ENCODE measurements at regions of chr3 and their contacts with region 1.

Region 1: GRCh38 chr3:124467980-124468902 is 262.0 kb upstream of the UMPS start:
- DNase-seq: peak; percentile 78
- H3K4me3 ChIP-seq: no peak overlapping the region; a peak in 1 of 4 replicates
- H3K27ac ChIP-seq: peak overlapping the region in 1 of 2 experiments; percentile 47; a peak in 1 of 4 replicates
- H3K4me1 ChIP-seq: peaks cover 0 to 10% of the 10 kb centered on the region in 2 experiments; a peak in 2 of 4 replicates
- H3K27me3 ChIP-seq: no peaks in the 10 kb centered on the region
- CTCF ChIP-seq: peak; percentile 99
- EP300 ChIP-seq: no peak
- RAD21 ChIP-seq: peak; percentile 99

Region 2: DNA sequence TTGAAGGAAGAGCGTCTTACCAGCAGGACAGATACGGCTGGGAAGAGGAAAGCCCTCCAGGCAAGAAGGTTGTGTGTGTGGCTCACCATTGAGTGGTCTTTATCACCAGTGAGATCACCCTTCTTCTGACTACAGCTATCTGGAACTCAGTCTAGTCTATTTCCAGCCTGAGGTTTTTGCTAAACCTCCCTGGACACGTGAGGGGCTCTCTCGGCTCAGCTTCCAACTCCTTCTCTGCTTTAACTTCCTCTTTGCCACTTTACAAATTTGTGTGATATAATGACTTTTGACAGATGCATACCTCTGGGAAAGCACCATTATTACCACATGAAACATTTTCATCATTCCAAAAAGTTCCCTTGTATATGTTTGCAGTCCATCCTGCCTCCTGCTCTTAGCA is 461.1 kb before region 1 on chr3:
- CTCF ChIA-PET with region 1: interaction called, 11 read pairs
- POLR2A ChIA-PET with region 1: no interaction called
- DNase-seq: no peak
- H3K4me3 ChIP-seq: no peak overlapping the region
- H3K27ac ChIP-seq: peak overlapping the region; percentile 24 to 43; a peak in 2 of 4 replicates
- H3K4me1 ChIP-seq: peaks cover 0 to 2% of the 10 kb centered on the region in 2 experiments; a peak in 1 of 4 replicates
- H3K27me3 ChIP-seq: no peaks in the 10 kb centered on the region
- CTCF ChIP-seq: no peak
- EP300 ChIP-seq: peak in 1 of 2 experiments; percentile 21; a peak in 1 of 4 replicates
- RAD21 ChIP-seq: no peak

Region 3: GRCh38 chr3:124032648-124033359 is 435.4 kb before region 1 on chr3:
- CTCF ChIA-PET with region 1: interaction called, 11 read pairs
- POLR2A ChIA-PET with region 1: no interaction called
- DNase-seq: peak; percentile 97
- H3K4me3 ChIP-seq: peak overlapping the region; percentile 96 to 97
- H3K27ac ChIP-seq: peak overlapping the region; percentile 65 to 92
- H3K4me1 ChIP-seq: peaks cover 0 to 22% of the 10 kb centered on the region in 2 experiments; a peak in 3 of 4 replicates
- H3K27me3 ChIP-seq: no peaks in the 10 kb centered on the region
- CTCF ChIP-seq: peak; percentile 56
- EP300 ChIP-seq: peak; percentile 4 to 83; a peak in 1 of 4 replicates
- RAD21 ChIP-seq: peak; percentile 49

Region 4: DNA sequence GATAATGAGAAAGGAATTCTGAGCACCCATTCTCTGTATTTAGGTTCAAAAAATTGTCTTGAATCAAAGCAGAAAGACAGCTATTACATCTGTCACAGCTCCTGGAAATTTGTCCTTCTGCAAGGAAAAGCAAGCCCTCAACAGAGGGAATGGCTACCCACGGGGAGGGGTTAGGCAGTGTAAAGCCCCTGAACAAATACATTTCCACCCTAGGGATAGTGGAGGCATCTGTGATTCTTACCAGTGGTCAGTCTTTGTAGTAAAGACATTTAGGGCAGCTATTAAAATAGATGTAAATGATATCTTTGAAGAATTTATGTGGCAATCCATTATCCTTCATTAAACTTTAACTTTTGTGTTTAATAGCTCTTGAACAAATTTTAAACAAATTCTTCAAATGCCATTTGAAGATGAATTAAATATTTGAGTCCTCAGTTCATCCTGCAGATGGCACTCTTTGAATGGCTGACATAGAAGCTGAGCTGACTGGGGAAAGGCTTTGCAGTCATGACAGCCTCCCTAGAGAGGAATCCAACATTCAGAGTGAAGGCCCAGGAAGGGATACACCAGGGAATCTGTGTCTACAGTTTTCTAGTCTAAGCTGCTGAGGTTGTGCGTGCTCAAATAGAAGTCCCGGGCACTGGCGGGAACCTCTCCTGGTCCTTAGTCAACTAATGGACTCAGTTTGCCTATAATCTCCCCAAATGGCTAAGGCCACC is 116.7 kb before region 1 on chr3:
- CTCF ChIA-PET with region 1: interaction called, 165 read pairs
- POLR2A ChIA-PET with region 1: no interaction called
- DNase-seq: peak; percentile 62
- H3K4me3 ChIP-seq: no peak overlapping the region
- H3K27ac ChIP-seq: peak overlapping the region in 1 of 2 experiments; percentile 67; a peak in 2 of 4 replicates
- H3K4me1 ChIP-seq: peaks cover 0 to 10% of the 10 kb centered on the region in 2 experiments; a peak in 2 of 4 replicates
- H3K27me3 ChIP-seq: no peaks in the 10 kb centered on the region
- CTCF ChIP-seq: peak; percentile 77
- EP300 ChIP-seq: no peak
- RAD21 ChIP-seq: peak; percentile 93

Region 5: GRCh38 chr3:124413393-124413792 is 54.8 kb before region 1 on chr3:
- CTCF ChIA-PET with region 1: no interaction called
- POLR2A ChIA-PET with region 1: no interaction called
- DNase-seq: no peak
- H3K4me3 ChIP-seq: no peak overlapping the region
- H3K27ac ChIP-seq: peak overlapping the region in 1 of 2 experiments; percentile 68; a peak in 2 of 4 replicates
- H3K4me1 ChIP-seq: peaks cover 13 to 27% of the 10 kb centered on the region in 2 experiments; a peak in 3 of 4 replicates
- H3K27me3 ChIP-seq: no peaks in the 10 kb centered on the region
- CTCF ChIP-seq: no peak
- EP300 ChIP-seq: no peak
- RAD21 ChIP-seq: no peak

Region 6: GRCh38 chr3:124439603-124440002 is 28.6 kb before region 1 on chr3:
- CTCF ChIA-PET with region 1: interaction called, 15 read pairs
- POLR2A ChIA-PET with region 1: no interaction called
- DNase-seq: no peak
- H3K4me3 ChIP-seq: no peak overlapping the region
- H3K27ac ChIP-seq: no peak overlapping the region
- H3K4me1 ChIP-seq: peaks cover 2 to 4% of the 10 kb centered on the region in 2 experiments; a peak in 2 of 4 replicates
- H3K27me3 ChIP-seq: no peaks in the 10 kb centered on the region
- CTCF ChIP-seq: no peak
- EP300 ChIP-seq: no peak
- RAD21 ChIP-seq: no peak

Region 7: DNA sequence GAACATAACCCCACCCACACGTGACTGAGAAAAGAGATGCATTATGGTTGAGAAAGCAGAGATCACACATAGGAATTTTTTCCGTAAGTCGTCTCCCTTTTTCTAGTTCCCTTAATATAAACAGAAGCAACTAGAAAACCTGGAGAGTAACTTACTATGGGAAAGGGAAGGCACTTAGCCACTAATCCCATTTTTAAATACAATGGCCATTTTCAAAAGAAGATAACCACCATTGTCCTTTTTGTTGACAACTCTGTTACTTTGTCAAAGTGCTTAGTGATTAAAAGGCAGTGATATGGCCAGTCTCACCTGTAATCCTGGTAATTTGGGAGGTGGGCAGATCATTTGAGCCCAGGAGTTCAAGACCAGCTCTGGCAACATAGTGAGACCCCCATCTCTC is 77.7 kb after region 1 on chr3:
- CTCF ChIA-PET with region 1: interaction called, 13 read pairs
- POLR2A ChIA-PET with region 1: no interaction called
- DNase-seq: no peak
- H3K4me3 ChIP-seq: no peak overlapping the region
- H3K27ac ChIP-seq: no peak overlapping the region
- H3K4me1 ChIP-seq: no peaks in the 10 kb centered on the region
- H3K27me3 ChIP-seq: no peaks in the 10 kb centered on the region
- CTCF ChIP-seq: no peak
- EP300 ChIP-seq: no peak
- RAD21 ChIP-seq: no peak

Region 8: DNA sequence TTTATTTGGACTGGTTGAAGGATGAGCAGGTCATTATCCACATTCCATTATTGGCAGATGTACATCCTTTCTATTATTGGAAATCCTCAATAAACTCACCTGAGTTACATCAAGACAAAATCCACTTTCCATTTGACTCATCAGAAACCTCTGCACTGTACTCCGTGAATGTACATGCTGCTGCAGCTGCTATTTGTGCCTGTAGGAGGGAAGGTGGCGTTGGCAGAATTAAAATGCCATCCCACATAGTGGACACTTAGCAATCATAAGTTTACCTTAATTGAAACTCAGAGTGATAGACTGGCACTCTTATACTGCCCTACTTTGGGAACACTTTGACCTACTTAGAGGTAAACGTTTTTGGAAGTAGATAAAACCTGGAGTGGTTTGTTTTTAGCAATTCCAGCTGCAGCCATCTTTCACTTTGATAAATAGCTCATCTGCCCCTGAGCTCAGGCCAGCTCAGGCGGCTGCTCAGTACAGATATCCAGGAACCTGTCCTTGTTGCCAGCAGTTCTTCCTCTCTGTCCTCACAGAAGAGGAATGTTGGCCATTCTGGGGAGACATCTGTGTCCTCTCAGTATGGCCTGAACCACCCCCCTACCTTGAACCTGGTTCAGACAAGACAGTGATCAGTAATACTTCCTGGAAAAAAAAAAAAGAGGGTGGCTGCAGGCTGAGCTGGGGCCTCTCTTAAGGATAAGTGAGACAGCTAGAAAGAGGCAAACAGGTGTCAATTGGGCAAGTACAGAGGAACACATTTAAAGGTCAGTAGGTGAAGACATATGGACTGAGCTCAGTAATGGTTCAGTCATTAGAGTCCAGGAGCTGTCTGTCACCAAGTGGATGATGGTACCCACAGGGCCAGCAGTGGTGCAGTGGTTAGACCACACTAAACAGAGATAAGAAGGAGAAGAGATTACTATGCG is 108.6 kb after region 1 on chr3:
- CTCF ChIA-PET with region 1: no interaction called
- POLR2A ChIA-PET with region 1: no interaction called
- DNase-seq: no peak
- H3K4me3 ChIP-seq: no peak overlapping the region
- H3K27ac ChIP-seq: no peak overlapping the region
- H3K4me1 ChIP-seq: 0 out of 4 replicates have a peak, but pooled peaks cover 0 to 4% of the 10 kb centered on the region in 2 experiments
- H3K27me3 ChIP-seq: no peaks in the 10 kb centered on the region
- CTCF ChIP-seq: no peak
- EP300 ChIP-seq: no peak
- RAD21 ChIP-seq: no peak

Measured in SK-N-SH (cell line).